ENCODE measurements at regions of chr22 and their contacts with region 1.

Region 1: DNA sequence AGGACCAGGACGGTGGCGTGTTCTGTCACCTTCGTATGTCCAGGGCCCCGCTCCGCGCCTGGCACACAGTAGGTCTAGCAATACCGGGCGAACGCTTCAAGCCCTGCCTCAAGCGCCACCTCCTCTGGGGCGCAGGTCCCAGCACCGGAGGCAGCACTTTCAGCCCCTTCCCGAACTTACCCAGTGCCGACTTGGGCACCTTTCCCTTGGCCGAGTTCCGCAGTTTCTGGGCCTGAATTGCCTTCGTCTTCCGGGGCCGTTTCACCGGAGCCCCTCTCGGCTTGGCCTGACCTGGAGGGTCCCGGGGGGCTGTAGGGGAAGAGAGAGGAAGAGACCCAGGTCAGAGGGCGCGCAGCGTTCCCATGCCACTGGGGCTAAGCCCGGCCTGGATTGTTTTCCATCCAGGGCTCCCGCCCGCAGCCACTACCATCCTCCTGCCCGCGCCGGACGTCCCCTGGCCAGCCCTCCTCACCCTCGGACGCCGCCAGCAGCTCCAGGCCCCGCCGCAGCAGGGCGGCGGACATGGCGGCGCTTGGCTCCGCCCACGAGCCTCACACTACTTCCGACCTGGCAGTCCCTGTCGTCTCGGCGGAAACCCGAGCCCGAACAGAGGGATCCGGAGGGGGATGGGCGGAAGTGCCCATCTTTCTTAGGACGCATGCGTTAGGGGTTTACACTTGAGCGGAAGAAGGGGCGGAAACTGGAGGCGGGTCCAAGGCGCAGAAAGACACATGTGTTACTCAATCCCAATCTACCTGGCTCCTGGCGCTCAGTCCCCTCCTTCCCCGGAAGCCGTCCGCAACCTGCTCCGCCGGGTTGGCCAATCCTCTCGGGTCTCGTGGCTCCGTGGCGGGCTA is at the start of gene RPS19BP1:
- DNase-seq: peak; percentile 100
- H3K4me3 Mint-ChIP-seq: peak within 1 kb of the TSS; percentile 97
- H3K27ac Mint-ChIP-seq: peak within 1 kb of the TSS; percentile 87
- H3K4me1 Mint-ChIP-seq: peaks cover 44% of the 10 kb centered on the region
- H3K27me3 Mint-ChIP-seq: no peaks in the 10 kb centered on the region
- CTCF ChIP-seq: no peak
- total RNA-seq, gene RPS19BP1: 104 and 106 TPM in 2 replicates

Region 2: GRCh38 chr22:39428578-39429071 is 103.8 kb before region 1 on chr22:
- CTCF ChIA-PET with region 1: no interaction called
- POLR2A ChIA-PET with region 1: no interaction called
- intact Hi-C with region 1: no loop called
- DNase-seq: no peak
- H3K4me3 Mint-ChIP-seq: no peak overlapping the region
- H3K27ac Mint-ChIP-seq: no peak overlapping the region
- H3K4me1 Mint-ChIP-seq: no peaks in the 10 kb centered on the region
- H3K27me3 Mint-ChIP-seq: no peaks in the 10 kb centered on the region
- CTCF ChIP-seq: no peak

Region 3: GRCh38 chr22:39496131-39496838 is 36.2 kb before region 1 on chr22:
- CTCF ChIA-PET with region 1: interaction called, 66 read pairs
- POLR2A ChIA-PET with region 1: interaction called, 17 read pairs
- intact Hi-C with region 1: loop called (anchors 1 kb)
- DNase-seq: peak; percentile 58
- H3K4me3 Mint-ChIP-seq: no peak overlapping the region
- H3K27ac Mint-ChIP-seq: no peak overlapping the region
- H3K4me1 Mint-ChIP-seq: peaks cover 2% of the 10 kb centered on the region
- H3K27me3 Mint-ChIP-seq: no peaks in the 10 kb centered on the region
- CTCF ChIP-seq: peak; percentile 61

Region 4: GRCh38 chr22:39520054-39520891 is 12.2 kb before region 1 on chr22 and contains the start of gene ATF4:
- CTCF ChIA-PET with region 1: interaction called, 19 read pairs
- POLR2A ChIA-PET with region 1: interaction called, 85 read pairs
- intact Hi-C with region 1: no loop called
- DNase-seq: peak; percentile 98
- H3K4me3 Mint-ChIP-seq: peak within 1 kb of the TSS; percentile 93
- H3K27ac Mint-ChIP-seq: peak within 1 kb of the TSS; percentile 100
- H3K4me1 Mint-ChIP-seq: peaks cover 23% of the 10 kb centered on the region
- H3K27me3 Mint-ChIP-seq: no peaks in the 10 kb centered on the region
- CTCF ChIP-seq: no peak
- total RNA-seq, gene ATF4: 717 and 764 TPM in 2 replicates

Region 5: GRCh38 chr22:39997939-39998338 is 465.5 kb after region 1 on chr22:
- CTCF ChIA-PET with region 1: interaction called, 6 read pairs
- POLR2A ChIA-PET with region 1: interaction called, 3 read pairs
- intact Hi-C with region 1: loop called (anchors 1 kb)
- DNase-seq: peak; percentile 95
- H3K4me3 Mint-ChIP-seq: peak overlapping the region; percentile 73
- H3K27ac Mint-ChIP-seq: peak overlapping the region; percentile 61
- H3K4me1 Mint-ChIP-seq: peaks cover 62% of the 10 kb centered on the region
- H3K27me3 Mint-ChIP-seq: peaks cover 8% of the 10 kb centered on the region
- CTCF ChIP-seq: no peak

Region 6: GRCh38 chr22:40036591-40037225 is 504.3 kb after region 1 on chr22:
- CTCF ChIA-PET with region 1: interaction called, 471 read pairs
- POLR2A ChIA-PET with region 1: interaction called, 10 read pairs
- intact Hi-C with region 1: loop called (anchors 5 kb)
- DNase-seq: peak; percentile 77
- H3K4me3 Mint-ChIP-seq: no peak overlapping the region
- H3K27ac Mint-ChIP-seq: no peak overlapping the region
- H3K4me1 Mint-ChIP-seq: peaks cover 28% of the 10 kb centered on the region
- H3K27me3 Mint-ChIP-seq: no peaks in the 10 kb centered on the region
- CTCF ChIP-seq: peak; percentile 75

Measured in MCF 10A (cell line).